MCF 10A (cell line): ENCODE measurements at regions of chr12 and their contacts with region 1.

Region 1: GRCh38 chr12:42023733-42024494 is 120.8 kb downstream of the GXYLT1 start:
- DNase-seq: peak; percentile 74
- H3K4me3 Mint-ChIP-seq: peak overlapping the region; percentile 46
- H3K27ac Mint-ChIP-seq: no peak overlapping the region
- H3K4me1 Mint-ChIP-seq: peaks cover 7% of the 10 kb centered on the region
- H3K27me3 Mint-ChIP-seq: no peaks in the 10 kb centered on the region
- CTCF ChIP-seq: peak; percentile 95

Region 2: DNA sequence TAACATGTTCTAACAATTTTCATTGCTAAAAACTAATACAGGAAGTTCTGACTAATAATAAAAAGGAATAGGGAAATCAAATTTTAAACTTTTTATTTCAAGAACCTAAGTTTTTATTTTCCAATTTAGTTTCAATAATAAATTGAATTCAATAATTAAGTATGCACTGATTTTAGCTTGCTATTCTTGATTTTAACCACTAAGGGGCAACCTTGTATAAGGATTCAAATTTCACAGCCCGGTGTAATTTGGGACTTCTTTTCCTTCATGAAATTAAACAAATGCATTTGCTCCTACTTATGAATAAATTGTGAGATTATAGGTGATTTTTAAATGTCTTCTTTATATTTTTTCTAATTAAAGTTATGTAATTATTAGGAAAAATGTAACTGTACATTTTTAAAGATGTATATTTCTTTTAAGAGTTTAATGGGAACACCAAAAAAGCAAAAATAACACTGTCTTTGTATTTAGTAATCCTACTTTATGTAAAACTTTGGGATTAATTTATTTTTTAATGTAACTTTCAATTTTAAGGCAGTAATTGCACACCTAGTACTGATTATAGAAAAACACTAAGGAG is 1077.2 kb before region 1 on chr12:
- CTCF ChIA-PET with region 1: interaction called, 16 read pairs
- POLR2A ChIA-PET with region 1: no interaction called
- intact Hi-C with region 1: loop called (anchors 5 kb)
- DNase-seq: peak; percentile 22
- H3K4me3 Mint-ChIP-seq: no peak overlapping the region
- H3K27ac Mint-ChIP-seq: no peak overlapping the region
- H3K4me1 Mint-ChIP-seq: no peaks in the 10 kb centered on the region
- H3K27me3 Mint-ChIP-seq: peaks cover 50% of the 10 kb centered on the region
- CTCF ChIP-seq: peak; percentile 49

Region 3: DNA sequence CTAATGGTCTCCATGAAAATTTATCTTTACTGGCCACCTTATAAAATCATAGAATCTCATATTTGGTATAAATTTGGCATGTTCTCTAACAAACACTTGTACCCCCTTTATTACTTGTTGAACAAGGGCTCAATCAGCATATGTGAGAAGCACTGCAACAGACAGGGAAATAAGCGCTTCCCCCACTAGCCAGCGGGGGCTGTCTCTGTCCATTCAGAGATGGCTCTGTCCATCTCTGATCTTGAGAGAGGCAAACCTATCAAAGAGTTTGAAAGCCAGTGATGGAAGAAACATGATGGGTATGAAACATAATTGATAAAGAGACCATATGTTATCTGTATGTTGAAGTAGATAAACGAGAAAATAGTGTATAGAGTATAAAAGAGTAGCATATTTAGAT is 509.0 kb before region 1 on chr12:
- CTCF ChIA-PET with region 1: interaction called, 10 read pairs
- POLR2A ChIA-PET with region 1: no interaction called
- intact Hi-C with region 1: no loop called
- DNase-seq: no peak
- H3K4me3 Mint-ChIP-seq: no peak overlapping the region
- H3K27ac Mint-ChIP-seq: no peak overlapping the region
- H3K4me1 Mint-ChIP-seq: no peaks in the 10 kb centered on the region
- H3K27me3 Mint-ChIP-seq: peaks cover 28% of the 10 kb centered on the region
- CTCF ChIP-seq: no peak

Region 4: DNA sequence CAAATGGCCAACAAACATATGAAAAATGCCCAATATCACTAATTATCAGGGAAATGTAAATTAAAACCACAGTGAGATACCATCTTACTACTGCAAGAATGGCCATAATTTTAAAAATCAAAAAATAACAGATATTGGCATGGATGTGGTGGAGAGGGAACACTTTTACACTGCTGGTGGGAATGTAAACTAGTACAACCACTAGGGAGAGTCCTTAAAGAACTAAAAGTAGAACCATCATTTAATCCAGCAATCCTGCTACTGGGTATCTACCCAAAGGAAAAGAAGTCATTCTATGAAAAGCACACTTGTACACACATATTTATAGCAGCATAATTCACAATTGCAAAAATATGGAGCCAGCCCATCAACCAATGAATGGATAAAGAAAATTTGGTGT is 338.9 kb before region 1 on chr12:
- CTCF ChIA-PET with region 1: interaction called, 5 read pairs
- POLR2A ChIA-PET with region 1: no interaction called
- intact Hi-C with region 1: loop called (anchors 10 kb)
- DNase-seq: no peak
- H3K4me3 Mint-ChIP-seq: no peak overlapping the region
- H3K27ac Mint-ChIP-seq: no peak overlapping the region
- H3K4me1 Mint-ChIP-seq: no peaks in the 10 kb centered on the region
- H3K27me3 Mint-ChIP-seq: peaks cover 6% of the 10 kb centered on the region
- CTCF ChIP-seq: no peak

Region 5: DNA sequence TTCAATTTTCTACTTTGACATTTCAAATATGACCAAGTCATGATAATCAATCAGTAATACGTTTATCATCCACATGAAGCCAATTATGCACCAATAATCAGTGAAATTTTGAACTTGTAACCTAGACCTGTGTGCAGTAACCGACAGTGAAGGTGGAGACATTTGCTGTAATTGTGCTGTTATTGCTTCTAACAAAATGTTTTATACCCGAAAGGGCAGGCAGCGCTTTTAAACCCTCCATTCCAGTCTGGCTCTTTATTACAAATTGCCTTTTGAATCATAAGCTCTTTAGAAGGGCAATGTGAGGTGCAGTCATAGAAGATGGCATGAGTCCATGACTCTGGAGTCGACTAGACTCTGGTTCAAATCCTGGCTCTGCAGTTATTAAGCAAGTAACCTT is 14.9 kb before region 1 on chr12:
- CTCF ChIA-PET with region 1: interaction called, 46 read pairs
- POLR2A ChIA-PET with region 1: no interaction called
- intact Hi-C with region 1: no loop called
- DNase-seq: no peak
- H3K4me3 Mint-ChIP-seq: no peak overlapping the region
- H3K27ac Mint-ChIP-seq: no peak overlapping the region
- H3K4me1 Mint-ChIP-seq: no peaks in the 10 kb centered on the region
- H3K27me3 Mint-ChIP-seq: peaks cover 18% of the 10 kb centered on the region
- CTCF ChIP-seq: no peak

Region 6: GRCh38 chr12:42144408-42145196 is 120.7 kb after region 1 on chr12 and contains the start of gene GXYLT1:
- CTCF ChIA-PET with region 1: no interaction called
- POLR2A ChIA-PET with region 1: no interaction called
- intact Hi-C with region 1: no loop called
- DNase-seq: peak; percentile 94
- H3K4me3 Mint-ChIP-seq: peak within 1 kb of the TSS; percentile 85
- H3K27ac Mint-ChIP-seq: peak within 1 kb of the TSS; percentile 92
- H3K4me1 Mint-ChIP-seq: peaks cover 30% of the 10 kb centered on the region
- H3K27me3 Mint-ChIP-seq: no peaks in the 10 kb centered on the region
- CTCF ChIP-seq: no peak
- total RNA-seq, gene GXYLT1: 12.4 and 14.6 TPM in 2 replicates

Region 7: DNA sequence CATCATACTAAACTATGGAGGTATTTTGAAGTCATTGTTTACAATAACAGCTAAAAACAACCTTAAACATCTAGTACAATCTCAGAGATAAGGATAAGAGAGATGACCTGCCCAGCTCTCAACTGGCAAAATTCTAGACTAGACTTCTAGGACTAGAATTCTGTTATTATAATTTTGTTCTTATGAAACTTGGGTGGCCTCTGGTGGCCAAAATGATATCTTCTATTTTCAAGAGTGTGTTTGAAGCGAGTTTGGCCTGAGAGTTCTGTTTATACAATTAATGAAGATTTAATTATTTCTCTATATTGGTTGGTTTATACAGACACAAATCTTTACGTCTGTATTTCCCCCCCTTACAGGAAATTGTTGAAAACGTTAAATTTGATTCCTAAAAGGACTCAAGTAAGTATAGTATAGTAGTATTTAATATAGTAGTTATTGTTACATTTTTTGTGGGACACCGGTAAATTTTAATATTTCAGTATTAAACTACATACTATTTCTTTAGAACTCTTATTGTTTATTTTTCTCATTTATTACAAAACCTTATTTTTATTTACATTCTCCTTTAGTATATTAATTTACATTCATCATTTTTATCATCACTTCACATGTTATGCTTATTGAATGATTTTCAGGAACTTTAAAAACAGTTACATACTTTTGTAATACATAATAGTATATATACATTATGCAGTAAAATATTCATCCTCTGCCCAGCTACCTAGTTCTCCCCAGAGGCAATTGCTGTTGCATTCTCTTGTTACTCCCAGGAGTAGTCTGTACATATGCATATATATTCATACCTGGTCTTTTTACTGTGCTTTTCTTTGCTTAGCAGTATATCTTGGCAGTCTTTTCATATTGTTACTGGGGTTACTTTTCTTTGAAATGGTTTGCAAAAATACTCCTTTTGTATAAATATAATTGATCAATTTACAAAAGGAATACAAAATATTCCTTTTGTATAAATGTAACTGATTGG is 308.7 kb after region 1 on chr12:
- CTCF ChIA-PET with region 1: interaction called, 13 read pairs
- POLR2A ChIA-PET with region 1: no interaction called
- intact Hi-C with region 1: no loop called
- DNase-seq: peak; percentile 53
- H3K4me3 Mint-ChIP-seq: no peak overlapping the region
- H3K27ac Mint-ChIP-seq: peak overlapping the region; percentile 16
- H3K4me1 Mint-ChIP-seq: peaks cover 38% of the 10 kb centered on the region
- H3K27me3 Mint-ChIP-seq: no peaks in the 10 kb centered on the region
- CTCF ChIP-seq: peak; percentile 55

Region 8: GRCh38 chr12:42603246-42603645 is 579.3 kb after region 1 on chr12:
- CTCF ChIA-PET with region 1: no interaction called
- POLR2A ChIA-PET with region 1: no interaction called
- intact Hi-C with region 1: no loop called
- DNase-seq: no peak
- H3K4me3 Mint-ChIP-seq: no peak overlapping the region
- H3K27ac Mint-ChIP-seq: no peak overlapping the region
- H3K4me1 Mint-ChIP-seq: no peaks in the 10 kb centered on the region
- H3K27me3 Mint-ChIP-seq: no peaks in the 10 kb centered on the region
- CTCF ChIP-seq: no peak